B cell (primary cell): ENCODE measurements at regions of chr11 and their contacts with region 1.

Region 1: DNA sequence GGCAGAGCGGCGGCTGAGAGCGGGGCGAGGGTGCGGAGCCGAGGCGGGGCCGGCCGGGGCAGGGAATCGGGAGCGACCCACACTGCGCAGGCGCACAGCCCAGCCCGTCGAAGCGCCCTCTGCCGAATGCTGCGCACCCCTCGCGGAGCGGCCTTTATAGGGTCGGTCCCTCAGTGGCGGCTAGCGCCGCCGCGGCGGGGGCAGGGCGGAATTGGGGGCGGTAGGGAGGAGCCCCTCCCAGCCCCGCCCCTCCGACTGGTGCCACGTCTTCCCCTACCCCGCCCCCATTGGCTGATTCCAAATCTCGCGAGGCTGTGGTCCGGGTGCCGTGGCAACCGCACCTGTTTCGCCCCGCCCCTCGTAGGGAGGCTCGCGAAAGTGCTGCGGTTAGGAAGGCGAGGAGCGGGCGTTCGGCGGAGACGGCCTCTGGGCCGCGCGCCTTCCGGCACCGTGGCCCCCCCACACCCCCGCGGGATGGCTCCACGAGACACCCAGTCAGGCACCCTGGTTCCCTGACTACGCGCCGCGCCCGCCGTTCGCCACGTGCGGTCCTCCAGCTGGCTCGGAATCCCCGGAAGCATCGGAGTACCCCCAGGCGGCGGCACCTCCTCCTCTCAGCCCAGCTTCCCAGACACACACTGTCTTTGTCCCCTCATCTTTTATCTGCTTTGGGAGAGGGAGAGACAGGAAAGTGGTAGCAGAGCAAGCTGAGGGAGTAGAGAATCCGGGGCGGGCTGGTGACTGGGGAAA is at the start of gene EHD1:
- DNase-seq: peak; percentile 100
- ATAC-seq: peak; percentile 84
- H3K4me3 ChIP-seq: peak within 1 kb of the TSS; percentile 78 to 99 (median 92)
- H3K4me3 Mint-ChIP-seq: peak within 1 kb of the TSS; percentile 95
- H3K27ac ChIP-seq: peak within 1 kb of the TSS; percentile 86 to 99
- H3K27ac Mint-ChIP-seq: peak within 1 kb of the TSS; percentile 94
- H3K4me1 ChIP-seq: peaks cover 48 to 59% of the 10 kb centered on the region in 2 donors
- H3K4me1 Mint-ChIP-seq: peaks cover 61% of the 10 kb centered on the region
- H3K27me3 ChIP-seq: no peaks in the 10 kb centered on the region
- H3K27me3 Mint-ChIP-seq: no peaks in the 10 kb centered on the region
- CTCF ChIP-seq: peak; percentile 57
- total RNA-seq, gene EHD1: 249 and 280 TPM in 2 replicates

Region 2: DNA sequence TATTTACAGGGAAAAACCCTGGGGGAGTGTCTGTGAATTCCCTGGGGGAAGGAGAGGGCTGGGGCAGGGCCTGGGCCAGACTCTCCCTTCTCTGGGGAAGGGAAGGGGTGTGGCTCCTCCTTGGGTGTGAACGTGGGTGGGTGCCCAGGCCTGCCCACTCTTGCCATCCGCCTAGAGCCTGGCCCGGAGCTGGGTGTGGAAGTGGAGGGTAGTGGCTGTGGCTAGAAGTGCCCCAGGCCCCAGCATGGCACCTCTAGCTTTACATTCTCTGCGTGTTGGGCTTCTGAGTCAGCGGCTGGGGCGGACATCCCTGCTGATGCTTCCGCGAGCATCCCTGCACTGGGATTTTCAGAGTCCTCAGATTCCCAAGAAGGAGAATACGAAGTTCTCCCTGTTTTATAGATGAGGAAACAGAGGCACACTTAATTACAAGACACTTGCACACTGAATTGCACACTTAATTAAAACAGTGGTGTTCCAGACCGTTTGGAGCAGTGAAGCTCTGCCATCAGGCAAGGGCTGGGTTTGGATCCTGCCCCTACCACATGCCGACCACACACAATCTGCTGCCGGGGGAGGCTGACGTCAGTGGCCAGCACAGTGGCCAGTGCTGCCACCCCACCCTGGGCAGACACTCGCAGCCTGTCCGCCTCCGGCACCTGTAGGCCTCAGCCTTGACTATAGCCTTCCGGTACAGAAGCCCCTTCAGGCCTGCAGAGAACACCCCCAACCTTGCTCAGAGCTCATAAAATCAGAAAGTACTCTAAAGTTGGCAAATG is 601.8 kb before region 1 on chr11:
- CTCF ChIA-PET with region 1: no interaction called
- POLR2A ChIA-PET with region 1: interaction called, 11 read pairs
- intact Hi-C with region 1: no loop called
- DNase-seq: no peak
- ATAC-seq: no peak
- H3K4me3 ChIP-seq: no peak overlapping the region
- H3K4me3 Mint-ChIP-seq: no peak overlapping the region
- H3K27ac ChIP-seq: no peak overlapping the region
- H3K27ac Mint-ChIP-seq: no peak overlapping the region
- H3K4me1 ChIP-seq: peaks cover 2 to 3% of the 10 kb centered on the region in 2 donors
- H3K4me1 Mint-ChIP-seq: peaks cover 2% of the 10 kb centered on the region
- H3K27me3 ChIP-seq: no peaks in the 10 kb centered on the region
- H3K27me3 Mint-ChIP-seq: no peaks in the 10 kb centered on the region
- CTCF ChIP-seq: no peak

Region 3: DNA sequence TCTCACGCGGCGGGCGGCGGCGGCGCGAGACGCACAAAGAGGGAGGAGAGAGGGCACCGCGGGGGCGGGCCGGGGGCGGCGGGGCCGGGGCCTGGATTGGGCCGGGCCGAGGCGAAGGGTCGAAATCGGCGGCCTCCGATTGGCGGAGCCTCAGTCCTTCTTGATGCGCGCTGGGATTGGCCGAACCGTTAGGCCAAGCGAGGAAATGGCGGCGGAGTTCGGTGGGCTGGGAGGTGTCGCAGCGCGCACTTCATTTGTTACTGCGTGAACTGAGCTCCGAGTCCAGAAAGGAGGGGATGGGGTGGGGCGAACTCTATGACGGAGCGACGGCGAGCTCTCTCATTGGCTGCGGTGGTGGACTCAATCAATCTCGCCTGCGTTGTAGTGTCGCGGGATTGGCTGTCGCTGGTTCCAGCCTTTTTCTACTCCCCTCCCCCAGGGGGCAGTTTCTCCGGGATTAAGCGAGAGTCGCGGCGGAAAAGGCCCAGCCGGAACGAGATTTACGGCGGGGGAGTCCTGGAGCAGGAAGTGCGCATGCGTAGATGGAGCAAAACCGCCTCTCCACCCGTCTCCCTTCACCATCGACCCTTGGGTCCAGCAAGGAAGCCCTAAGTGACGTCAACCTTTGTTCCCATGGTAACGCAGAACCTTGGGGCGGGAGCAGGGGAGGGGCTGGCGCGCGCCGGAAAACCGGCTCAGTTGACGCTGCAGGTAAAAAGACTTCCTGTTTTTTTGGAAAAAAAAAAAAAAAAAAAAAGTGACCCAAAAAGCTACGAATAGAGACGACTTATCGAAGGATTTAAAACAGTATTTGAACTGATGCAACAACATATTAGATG is 99.9 kb before region 1 on chr11 and contains the start of gene SF1:
- CTCF ChIA-PET with region 1: no interaction called
- POLR2A ChIA-PET with region 1: interaction called, 3 read pairs
- intact Hi-C with region 1: loop called (anchors 1 kb)
- DNase-seq: peak; percentile 100
- ATAC-seq: peak; percentile 82
- H3K4me3 ChIP-seq: peak within 1 kb of the TSS; percentile 79 to 92 (median 82)
- H3K4me3 Mint-ChIP-seq: peak within 1 kb of the TSS; percentile 95
- H3K27ac ChIP-seq: peak within 1 kb of the TSS; percentile 95 to 98
- H3K27ac Mint-ChIP-seq: peak within 1 kb of the TSS; percentile 99
- H3K4me1 ChIP-seq: peaks cover 60 to 71% of the 10 kb centered on the region in 2 donors
- H3K4me1 Mint-ChIP-seq: peaks cover 73% of the 10 kb centered on the region
- H3K27me3 ChIP-seq: no peaks in the 10 kb centered on the region
- H3K27me3 Mint-ChIP-seq: no peaks in the 10 kb centered on the region
- CTCF ChIP-seq: no peak
- total RNA-seq, gene SF1: 914 and 931 TPM in 2 replicates

Region 4: GRCh38 chr11:64803163-64803845 is 75.4 kb before region 1 on chr11 and contains the start of gene MAP4K2:
- CTCF ChIA-PET with region 1: no interaction called
- POLR2A ChIA-PET with region 1: no interaction called
- intact Hi-C with region 1: loop called (anchors 2 kb)
- DNase-seq: peak; percentile 90
- ATAC-seq: peak; percentile 83
- H3K4me3 ChIP-seq: peak within 1 kb of the TSS; percentile 66 to 96 (median 71)
- H3K4me3 Mint-ChIP-seq: peak within 1 kb of the TSS; percentile 90
- H3K27ac ChIP-seq: peak within 1 kb of the TSS; percentile 74 to 90
- H3K27ac Mint-ChIP-seq: peak within 1 kb of the TSS; percentile 92
- H3K4me1 ChIP-seq: peaks cover 46 to 54% of the 10 kb centered on the region in 2 donors
- H3K4me1 Mint-ChIP-seq: peaks cover 45% of the 10 kb centered on the region
- H3K27me3 ChIP-seq: no peaks in the 10 kb centered on the region
- H3K27me3 Mint-ChIP-seq: no peaks in the 10 kb centered on the region
- CTCF ChIP-seq: no peak
- total RNA-seq, gene MAP4K2: 118 and 122 TPM in 2 replicates

Region 5: DNA sequence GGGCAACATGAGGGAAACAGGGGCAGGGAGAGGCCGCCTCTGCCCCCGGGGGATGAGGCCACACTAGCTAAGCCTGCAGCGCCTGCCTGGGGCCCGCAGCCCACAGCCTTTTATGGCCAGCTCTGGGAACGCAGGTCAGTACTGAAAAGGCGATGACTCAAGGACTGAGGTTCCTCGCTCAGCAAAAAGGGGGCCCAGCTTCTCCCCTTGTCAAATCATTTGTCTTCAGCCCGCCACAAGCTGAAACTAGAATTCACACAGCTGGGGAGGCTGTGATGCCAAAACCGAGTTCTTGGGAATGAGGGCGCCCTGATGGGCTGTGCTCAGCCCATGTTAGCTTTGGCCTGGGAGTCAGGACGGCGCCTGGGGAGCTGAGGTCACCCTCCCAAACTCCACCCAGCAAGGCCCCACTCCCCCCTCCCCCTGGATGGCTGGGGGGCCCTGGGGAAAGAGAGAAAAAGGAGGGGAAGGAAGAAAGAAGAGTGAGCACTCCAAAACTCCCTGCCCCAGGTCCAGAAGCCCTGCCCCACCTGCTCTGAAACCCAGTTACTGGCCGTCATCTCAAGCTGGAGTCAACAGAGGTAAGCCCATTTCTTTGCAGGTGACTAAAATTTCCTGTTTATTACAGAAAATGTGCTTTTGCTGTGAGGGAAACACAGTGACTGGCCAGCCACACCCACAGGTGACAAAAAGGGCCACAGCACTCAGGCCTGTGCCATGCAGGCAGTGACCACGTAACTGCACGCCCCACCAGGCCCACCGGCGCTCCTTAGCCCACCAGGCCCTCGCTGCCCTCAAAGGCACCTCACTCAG is 14.0 kb before region 1 on chr11:
- CTCF ChIA-PET with region 1: interaction called, 1,254 read pairs
- POLR2A ChIA-PET with region 1: interaction called, 50 read pairs
- intact Hi-C with region 1: loop called (anchors 1 kb)
- DNase-seq: peak; percentile 43
- ATAC-seq: no peak
- H3K4me3 ChIP-seq: peak overlapping the region in 3 of 5 experiments; percentile 25 to 40 (median 28)
- H3K4me3 Mint-ChIP-seq: peak overlapping the region; percentile 77
- H3K27ac ChIP-seq: peak overlapping the region; percentile 74 to 87
- H3K27ac Mint-ChIP-seq: peak overlapping the region; percentile 90
- H3K4me1 ChIP-seq: peaks cover 93 to 99% of the 10 kb centered on the region in 2 donors
- H3K4me1 Mint-ChIP-seq: peaks cover 90% of the 10 kb centered on the region
- H3K27me3 ChIP-seq: no peaks in the 10 kb centered on the region
- H3K27me3 Mint-ChIP-seq: no peaks in the 10 kb centered on the region
- CTCF ChIP-seq: no peak

Region 6: DNA sequence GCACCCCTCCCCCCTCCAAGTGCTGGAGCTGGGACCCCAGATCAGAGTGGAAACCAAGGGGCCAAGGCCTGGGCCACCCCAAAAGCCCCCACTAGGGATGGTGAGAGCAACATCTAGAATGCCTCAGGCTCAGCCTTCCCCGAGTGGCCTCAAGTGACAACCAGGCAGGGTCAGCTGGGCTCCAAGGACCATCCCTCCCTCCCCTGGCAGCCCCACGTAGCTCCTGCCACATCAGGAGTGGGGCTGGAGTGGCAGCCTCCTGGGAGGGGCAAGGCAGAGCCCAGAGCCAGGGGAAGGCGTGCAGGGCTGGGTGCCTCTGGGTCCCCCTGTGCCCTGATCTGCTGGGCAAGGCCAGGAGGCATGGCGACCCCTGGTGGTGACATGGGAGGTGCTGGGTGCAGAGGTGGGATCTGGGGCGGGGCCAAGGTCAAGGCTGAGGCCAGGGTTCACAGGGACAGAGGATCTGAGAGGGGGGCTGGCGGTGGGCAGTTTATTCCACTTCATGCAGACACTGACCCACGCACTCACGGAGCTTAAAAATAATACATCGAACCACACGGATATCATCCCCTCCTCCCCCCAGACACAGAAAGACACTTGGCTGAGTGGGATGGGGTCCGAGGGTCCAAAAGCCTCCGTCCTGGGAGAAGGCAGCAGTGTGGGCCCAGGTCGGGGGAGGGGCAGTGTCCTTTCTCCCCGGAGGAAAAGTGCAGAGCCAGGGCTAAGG is 15.6 kb after region 1 on chr11:
- CTCF ChIA-PET with region 1: interaction called, 18 read pairs
- POLR2A ChIA-PET with region 1: interaction called, 4 read pairs
- intact Hi-C with region 1: no loop called
- DNase-seq: peak; percentile 91
- ATAC-seq: peak; percentile 98
- H3K4me3 ChIP-seq: no peak overlapping the region
- H3K4me3 Mint-ChIP-seq: no peak overlapping the region
- H3K27ac ChIP-seq: no peak overlapping the region
- H3K27ac Mint-ChIP-seq: peak overlapping the region; percentile 64
- H3K4me1 ChIP-seq: peaks cover 22 to 30% of the 10 kb centered on the region in 2 donors
- H3K4me1 Mint-ChIP-seq: peaks cover 16% of the 10 kb centered on the region
- H3K27me3 ChIP-seq: no peaks in the 10 kb centered on the region
- H3K27me3 Mint-ChIP-seq: no peaks in the 10 kb centered on the region
- CTCF ChIP-seq: peak; percentile 87

Region 7: GRCh38 chr11:64916775-64917662 is 38.4 kb after region 1 on chr11 and contains the start of gene ATG2A:
- CTCF ChIA-PET with region 1: no interaction called
- POLR2A ChIA-PET with region 1: no interaction called
- intact Hi-C with region 1: loop called (anchors 2 kb)
- DNase-seq: peak; percentile 99
- ATAC-seq: peak; percentile 97
- H3K4me3 ChIP-seq: peak within 1 kb of the TSS; percentile 86 to 96 (median 90)
- H3K4me3 Mint-ChIP-seq: peak within 1 kb of the TSS; percentile 88
- H3K27ac ChIP-seq: peak within 1 kb of the TSS; percentile 44 to 84
- H3K27ac Mint-ChIP-seq: peak within 1 kb of the TSS; percentile 91
- H3K4me1 ChIP-seq: peaks cover 19 to 33% of the 10 kb centered on the region in 2 donors
- H3K4me1 Mint-ChIP-seq: peaks cover 34% of the 10 kb centered on the region
- H3K27me3 ChIP-seq: no peaks in the 10 kb centered on the region
- H3K27me3 Mint-ChIP-seq: no peaks in the 10 kb centered on the region
- CTCF ChIP-seq: no peak
- total RNA-seq, gene ATG2A: 38.6 and 43.4 TPM in 2 replicates